Left ventricle myocardium superior (tissue), 1 donor: ENCODE measurements at regions of chr3 and their contacts with region 1.

Region 1: DNA sequence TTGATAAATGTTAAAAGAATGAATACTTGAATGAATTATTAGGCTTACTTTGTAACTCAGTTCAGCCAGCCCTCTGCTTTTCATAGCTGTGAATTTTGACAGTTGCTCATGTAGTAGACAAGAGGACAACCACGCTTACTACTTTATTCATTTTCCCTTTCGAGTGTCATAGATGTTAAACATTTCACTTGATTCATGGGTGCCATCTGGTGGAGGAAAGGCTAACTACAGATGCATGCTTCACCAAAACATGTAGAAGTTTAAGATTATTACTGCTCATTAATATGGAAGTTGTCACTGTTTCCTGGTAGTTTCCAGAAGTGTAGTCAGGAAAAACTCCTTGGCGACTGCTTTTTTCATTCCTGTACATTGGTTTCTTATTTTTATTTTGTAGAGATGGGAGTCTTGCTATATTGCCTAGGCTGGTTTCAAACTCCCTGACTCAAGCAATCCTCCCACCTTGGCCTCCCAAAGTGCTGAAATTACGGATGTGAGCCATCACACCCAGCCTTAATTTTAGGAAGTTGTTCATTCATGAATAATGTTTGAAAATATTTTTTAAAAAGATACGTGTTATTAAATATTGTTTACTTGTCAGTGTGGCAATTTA is 163.2 kb downstream of the B3GALNT1 start:
- DNase-seq: no peak
- ATAC-seq: peak; percentile 81

Region 2: GRCh38 chr3:160707187-160707794 is 234.7 kb before region 1 on chr3:
- intact Hi-C with region 1: loop called (anchors 5 kb)
- DNase-seq: no peak
- ATAC-seq: peak; percentile 74